Spleen (tissue), 13 donors: ENCODE measurements at regions of chr2 and their contacts with region 1.

Region 1: DNA sequence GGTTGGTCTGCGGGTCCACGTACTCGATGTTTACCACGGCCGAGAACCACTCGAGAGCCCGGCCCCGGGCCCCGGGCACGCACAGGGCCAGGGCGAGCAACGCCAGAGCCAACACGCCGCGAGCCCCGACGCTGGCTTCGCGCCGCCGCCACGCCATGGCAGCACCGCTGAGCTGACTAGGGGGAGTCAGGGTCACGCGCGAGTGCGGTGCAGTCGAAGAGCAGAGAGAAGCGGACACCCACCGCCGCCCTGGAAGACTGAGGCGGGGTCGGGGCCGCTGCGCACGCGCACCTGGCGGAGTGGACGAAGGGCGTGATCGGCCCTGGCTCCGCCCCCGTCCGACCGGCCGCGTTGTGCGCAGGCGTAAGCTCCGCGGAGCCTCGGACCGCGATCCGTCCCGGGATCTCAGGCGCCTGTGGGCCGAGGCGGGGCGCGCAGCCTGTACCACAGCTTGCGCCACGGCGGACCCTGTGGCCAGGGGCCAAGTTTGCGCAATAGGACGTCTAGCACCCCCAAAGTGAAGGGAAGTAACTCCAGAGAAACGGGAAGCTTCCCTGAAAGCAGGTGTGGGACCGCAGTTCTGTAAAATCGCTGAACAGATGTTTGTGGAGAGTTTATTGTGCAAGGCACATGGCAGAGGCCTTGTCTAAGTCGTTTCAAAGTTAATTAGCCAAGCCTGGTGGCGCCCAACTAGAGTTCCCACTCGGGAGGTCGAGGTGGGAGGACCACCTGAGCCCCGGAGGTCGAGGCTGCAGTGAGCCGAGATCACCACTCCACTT is at the start of gene RNF149:
- DNase-seq: peak; percentile 99
- H3K4me3 ChIP-seq: peak within 1 kb of the TSS; percentile 69 to 87 (median 78)
- H3K27ac ChIP-seq: peak within 1 kb of the TSS; percentile 96 to 100 (median 98)
- H3K4me1 ChIP-seq: peaks cover 23 to 85% (median 65%) of the 10 kb centered on the region in 6 donors
- H3K27me3 ChIP-seq: no peaks in the 10 kb centered on the region
- CTCF ChIP-seq: peak in 8 of 11 experiments; percentile 3 to 76 (median 46)
- POLR2A ChIP-seq: peak; percentile 68 to 95 (median 77)
- total RNA-seq, gene RNF149: 141 to 398 (median 234) TPM

Region 2: DNA sequence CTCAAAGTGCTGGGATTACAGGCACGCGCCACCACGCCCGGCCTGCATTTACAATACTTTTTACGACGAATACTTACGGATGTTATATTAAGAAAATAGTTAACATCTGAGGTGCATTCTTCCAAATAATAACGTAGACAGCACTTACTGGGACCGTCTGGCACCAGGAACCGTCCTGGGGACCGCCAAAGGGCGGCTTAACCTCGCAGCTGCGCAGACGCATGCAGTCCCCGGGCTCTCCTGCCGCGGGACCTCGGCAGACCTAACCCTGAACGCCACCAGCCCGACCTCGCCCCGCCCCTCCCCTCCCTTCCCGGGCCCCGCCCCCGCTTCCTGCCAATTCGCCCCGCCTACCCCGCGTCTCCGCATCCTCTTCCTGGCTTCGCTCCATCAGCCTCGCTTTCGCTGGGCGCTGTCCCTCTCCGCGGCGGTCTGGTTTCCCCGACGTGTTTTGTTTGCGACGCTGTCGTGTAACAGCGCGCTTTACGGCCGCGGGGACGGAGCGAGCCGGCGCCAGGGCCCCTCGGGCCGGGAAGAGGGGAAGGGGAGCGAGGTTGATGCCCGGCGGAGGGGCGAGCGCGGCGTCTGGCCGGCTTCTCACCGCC is 56.1 kb before region 1 on chr2 and contains the start of gene CNOT11:
- intact Hi-C with region 1: loop called (anchors 10 kb)
- DNase-seq: peak; percentile 99
- H3K4me3 ChIP-seq: peak within 1 kb of the TSS; percentile 76 to 99 (median 94)
- H3K27ac ChIP-seq: peak within 1 kb of the TSS; percentile 97 to 100 (median 99)
- H3K4me1 ChIP-seq: peaks cover 19 to 60% (median 43%) of the 10 kb centered on the region in 6 donors
- H3K27me3 ChIP-seq: no peaks in the 10 kb centered on the region
- CTCF ChIP-seq: peak in 6 of 11 experiments; percentile 17 to 67 (median 40)
- POLR2A ChIP-seq: peak; percentile 11 to 72 (median 58)
- total RNA-seq, gene CNOT11: 29.8 to 36.4 (median 34.1) TPM